PC-9 (cell line): ENCODE measurements at regions of chr22 and their contacts with region 1.

Region 1: DNA sequence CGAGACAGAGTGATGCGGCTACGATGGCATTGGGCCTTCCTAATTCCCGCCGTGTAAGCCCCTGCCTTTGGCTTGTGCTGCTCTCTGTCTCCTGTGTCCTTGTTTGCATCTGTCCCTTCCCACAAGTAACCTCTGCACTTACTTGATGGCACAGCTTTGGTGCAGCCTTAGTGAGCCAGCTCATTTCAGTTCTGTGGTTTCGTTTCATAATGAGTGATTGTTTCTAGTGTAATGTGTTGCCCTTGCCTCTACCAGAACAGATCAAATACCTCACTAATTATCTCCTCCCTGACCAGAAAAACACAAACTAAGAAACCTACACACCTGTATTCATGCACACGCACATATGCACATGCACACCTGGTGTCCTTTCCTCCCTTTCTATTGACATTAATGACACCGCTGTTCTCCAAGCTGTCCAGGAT is 58.8 kb downstream of the GRK3 start:
- DNase-seq: no peak
- H3K4me3 ChIP-seq: no peak overlapping the region
- H3K27ac ChIP-seq: no peak overlapping the region
- H3K4me1 ChIP-seq: no peaks in the 10 kb centered on the region
- H3K27me3 ChIP-seq: peaks cover 20% of the 10 kb centered on the region
- CTCF ChIP-seq: no peak

Region 2: GRCh38 chr22:25555586-25555985 is 67.7 kb before region 1 on chr22:
- CTCF ChIA-PET with region 1: no interaction called
- POLR2A ChIA-PET with region 1: interaction called, 11 read pairs
- intact Hi-C with region 1: no loop called
- DNase-seq: no peak
- H3K4me3 ChIP-seq: no peak overlapping the region
- H3K27ac ChIP-seq: no peak overlapping the region
- H3K4me1 ChIP-seq: no peaks in the 10 kb centered on the region
- H3K27me3 ChIP-seq: peaks cover 24% of the 10 kb centered on the region
- CTCF ChIP-seq: no peak